Transverse colon (tissue), 4 donors: ENCODE measurements at regions of chr7 and their contacts with region 1.

Region 1: GRCh38 chr7:149005241-149006050 is 22.9 kb downstream of the PDIA4 start:
- DNase-seq: peak; percentile 83
- H3K4me3 ChIP-seq: no peak overlapping the region
- H3K27ac ChIP-seq: no peak overlapping the region
- H3K4me1 ChIP-seq: no peaks in the 10 kb centered on the region
- H3K27me3 ChIP-seq: no peaks in the 10 kb centered on the region
- CTCF ChIP-seq: peak; percentile 85 to 90 (median 88)
- EP300 ChIP-seq: no peak
- POLR2A ChIP-seq: no peak

Region 2: GRCh38 chr7:149036676-149037075 is 31.2 kb after region 1 on chr7:
- in situ Hi-C with region 1: no loop called
- intact Hi-C with region 1: no loop called
- DNase-seq: no peak
- H3K4me3 ChIP-seq: no peak overlapping the region
- H3K27ac ChIP-seq: no peak overlapping the region
- H3K4me1 ChIP-seq: no peaks in the 10 kb centered on the region
- H3K27me3 ChIP-seq: no peaks in the 10 kb centered on the region
- CTCF ChIP-seq: no peak
- EP300 ChIP-seq: no peak
- POLR2A ChIP-seq: no peak

Region 3: GRCh38 chr7:149067876-149068275 is 62.4 kb after region 1 on chr7:
- in situ Hi-C with region 1: loop called in 1 of 4 experiments (anchors 10 kb)
- intact Hi-C with region 1: loop called (anchors 5 kb)
- DNase-seq: no peak
- H3K4me3 ChIP-seq: no peak overlapping the region
- H3K27ac ChIP-seq: no peak overlapping the region
- H3K4me1 ChIP-seq: peaks cover 0 to 4% (median 2%) of the 10 kb centered on the region in 4 donors
- H3K27me3 ChIP-seq: no peaks in the 10 kb centered on the region
- CTCF ChIP-seq: no peak
- EP300 ChIP-seq: no peak
- POLR2A ChIP-seq: no peak

Region 4: GRCh38 chr7:149081914-149082313 is 76.5 kb after region 1 on chr7:
- in situ Hi-C with region 1: loop called in 1 of 4 experiments (anchors 10 kb)
- intact Hi-C with region 1: no loop called
- DNase-seq: no peak
- H3K4me3 ChIP-seq: no peak overlapping the region
- H3K27ac ChIP-seq: no peak overlapping the region
- H3K4me1 ChIP-seq: no peaks in the 10 kb centered on the region
- H3K27me3 ChIP-seq: no peaks in the 10 kb centered on the region
- CTCF ChIP-seq: no peak
- EP300 ChIP-seq: no peak
- POLR2A ChIP-seq: no peak

Region 5: DNA sequence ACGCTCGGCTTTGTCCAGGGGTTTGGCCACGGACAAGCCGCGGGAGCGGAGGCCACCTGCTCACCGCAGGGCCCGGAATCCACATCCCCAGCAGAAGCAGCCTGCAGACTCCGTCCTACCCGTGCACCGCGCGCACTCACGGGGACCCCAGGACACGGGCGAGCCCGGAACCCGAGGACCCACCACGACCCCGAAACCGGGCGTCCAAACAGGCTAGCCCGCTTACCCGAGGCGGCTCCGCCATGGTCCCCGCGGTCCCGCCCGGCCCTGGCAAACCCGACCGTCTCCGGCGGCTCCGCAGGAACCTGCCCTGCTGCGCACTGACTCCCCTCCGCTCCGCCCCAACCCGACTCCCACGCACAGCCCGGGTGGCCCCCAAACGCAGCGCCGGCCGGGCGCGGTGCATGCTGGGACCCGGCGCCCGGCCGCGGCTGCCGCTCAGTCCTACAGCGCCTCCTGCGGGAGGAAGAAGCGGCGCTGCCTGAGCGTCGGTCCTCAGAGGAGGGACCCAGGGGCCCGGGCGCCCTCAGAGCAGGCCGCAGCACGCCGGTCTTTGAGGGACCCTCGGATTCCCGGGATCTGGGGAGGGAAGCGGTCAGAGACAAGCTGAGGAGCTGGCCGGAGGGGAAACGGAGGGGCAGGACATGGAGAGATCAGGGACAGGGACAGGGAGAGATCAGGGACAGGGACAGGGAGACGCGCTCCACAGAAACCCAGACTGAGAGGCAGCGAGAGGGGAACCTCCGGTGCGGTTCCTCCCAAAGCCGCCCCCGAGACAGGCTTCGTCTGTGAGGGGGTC is 85.2 kb after region 1 on chr7 and contains the start of gene ZNF786:
- in situ Hi-C with region 1: loop called in 2 of 4 experiments (anchors 10 kb)
- intact Hi-C with region 1: loop called (anchors 2 kb)
- DNase-seq: peak; percentile 90
- H3K4me3 ChIP-seq: peak within 1 kb of the TSS; percentile 63 to 93 (median 88)
- H3K27ac ChIP-seq: peak within 1 kb of the TSS; percentile 98 to 100 (median 99)
- H3K4me1 ChIP-seq: peaks cover 5 to 31% (median 6%) of the 10 kb centered on the region in 4 donors
- H3K27me3 ChIP-seq: no peaks in the 10 kb centered on the region
- CTCF ChIP-seq: peak; percentile 86 to 96 (median 93)
- EP300 ChIP-seq: no peak
- POLR2A ChIP-seq: peak; percentile 94
- total RNA-seq, gene ZNF786: 4.0 to 5.2 (median 5.2) TPM